Left ventricle myocardium superior (tissue), 1 donor: ENCODE measurements at regions of chr13 and their contacts with region 1.

Region 1: GRCh38 chr13:101942038-101942437 is 459.8 kb downstream of the FGF14 start:
- DNase-seq: no peak
- ATAC-seq: peak; percentile 96

Region 2: DNA sequence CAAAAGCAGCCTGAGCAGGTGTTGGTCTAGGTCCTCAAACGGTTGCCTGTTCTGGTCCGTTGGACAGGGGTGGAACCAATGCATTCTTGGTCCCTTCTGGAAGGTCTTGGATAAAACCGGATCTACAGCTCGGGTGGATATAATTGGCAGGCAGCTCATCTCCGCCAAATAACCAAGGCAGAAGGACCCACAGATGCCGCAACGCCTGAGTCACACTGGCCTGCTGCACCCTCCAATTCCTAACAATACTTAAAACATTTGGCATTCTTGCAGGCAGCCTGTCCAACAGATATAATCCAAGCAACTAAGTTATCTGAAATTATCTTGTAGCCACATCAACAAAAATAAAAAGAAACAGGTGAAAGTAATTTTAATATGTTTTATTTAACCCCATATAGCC is 518.8 kb after region 1 on chr13:
- intact Hi-C with region 1: loop called (anchors 2 kb)
- DNase-seq: no peak
- ATAC-seq: no peak

Region 3: DNA sequence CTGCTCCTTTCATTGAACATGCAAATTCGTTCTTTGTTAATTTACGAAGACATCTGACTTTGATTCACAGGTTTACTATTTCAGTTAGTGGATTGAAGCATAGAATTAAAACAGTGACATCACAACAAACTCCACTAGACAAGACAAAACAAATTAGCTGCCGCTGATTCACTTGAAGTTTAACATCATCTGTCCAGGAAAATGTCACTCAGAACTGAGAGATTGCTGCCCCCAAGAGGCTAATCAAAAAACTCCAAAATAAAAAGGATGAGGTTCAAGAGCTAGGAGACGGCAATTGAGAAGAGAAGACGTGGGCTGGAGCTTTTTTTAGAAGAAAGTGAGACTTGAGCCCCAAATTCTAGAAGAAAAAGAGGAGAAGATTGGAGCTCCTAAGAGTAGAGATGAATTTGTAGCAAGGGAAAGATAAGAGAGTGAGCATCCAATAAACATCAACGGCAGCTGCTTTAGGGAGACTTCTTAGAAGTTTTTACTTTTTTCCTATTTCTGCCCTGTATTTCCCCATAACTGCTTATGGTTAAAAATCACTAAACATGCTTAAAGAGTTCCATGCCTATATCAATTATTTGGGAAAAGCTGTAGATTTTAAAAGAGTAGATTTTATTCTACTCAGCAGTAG is 614.0 kb after region 1 on chr13:
- intact Hi-C with region 1: loop called (anchors 5 kb)
- DNase-seq: no peak
- ATAC-seq: no peak